Right ventricle myocardium inferior (tissue), 1 donor: ENCODE measurements at regions of chr3 and their contacts with region 1.

Region 1: DNA sequence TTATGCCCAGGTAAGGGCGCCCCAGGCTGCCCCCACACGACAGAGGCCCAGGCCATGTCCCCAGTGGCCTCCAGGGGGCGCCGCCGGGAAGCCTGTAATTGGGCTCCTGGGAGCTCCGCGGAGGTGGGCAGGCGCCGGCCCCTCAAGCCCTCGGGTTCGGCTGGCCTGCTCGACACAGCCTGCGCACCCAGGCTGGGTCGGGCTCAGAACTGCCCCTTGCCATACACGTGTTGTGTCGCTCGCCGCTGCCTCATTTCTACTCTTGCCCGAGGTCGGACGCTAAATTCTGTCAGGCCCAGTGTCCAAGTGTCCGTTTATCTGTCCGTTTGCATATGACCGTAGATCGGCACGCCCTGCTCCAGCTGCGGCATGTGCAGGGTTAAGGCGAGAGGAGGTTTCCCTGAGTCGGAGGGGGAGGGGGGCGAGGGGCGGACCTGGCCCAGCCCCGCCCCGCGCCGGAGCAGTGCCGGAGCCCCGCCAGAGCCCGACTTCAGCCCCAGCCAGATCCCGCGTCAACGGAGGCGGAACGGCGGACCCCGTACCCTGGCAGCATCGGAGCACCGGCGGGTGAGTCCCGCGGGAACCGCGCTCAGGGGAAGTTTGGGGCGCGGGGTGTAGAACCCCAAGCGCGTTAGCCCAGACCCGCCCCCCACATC is at the start of gene KLHDC8B:
- DNase-seq: peak; percentile 92
- ATAC-seq: peak; percentile 91
- total RNA-seq, gene KLHDC8B: 128 TPM

Region 2: DNA sequence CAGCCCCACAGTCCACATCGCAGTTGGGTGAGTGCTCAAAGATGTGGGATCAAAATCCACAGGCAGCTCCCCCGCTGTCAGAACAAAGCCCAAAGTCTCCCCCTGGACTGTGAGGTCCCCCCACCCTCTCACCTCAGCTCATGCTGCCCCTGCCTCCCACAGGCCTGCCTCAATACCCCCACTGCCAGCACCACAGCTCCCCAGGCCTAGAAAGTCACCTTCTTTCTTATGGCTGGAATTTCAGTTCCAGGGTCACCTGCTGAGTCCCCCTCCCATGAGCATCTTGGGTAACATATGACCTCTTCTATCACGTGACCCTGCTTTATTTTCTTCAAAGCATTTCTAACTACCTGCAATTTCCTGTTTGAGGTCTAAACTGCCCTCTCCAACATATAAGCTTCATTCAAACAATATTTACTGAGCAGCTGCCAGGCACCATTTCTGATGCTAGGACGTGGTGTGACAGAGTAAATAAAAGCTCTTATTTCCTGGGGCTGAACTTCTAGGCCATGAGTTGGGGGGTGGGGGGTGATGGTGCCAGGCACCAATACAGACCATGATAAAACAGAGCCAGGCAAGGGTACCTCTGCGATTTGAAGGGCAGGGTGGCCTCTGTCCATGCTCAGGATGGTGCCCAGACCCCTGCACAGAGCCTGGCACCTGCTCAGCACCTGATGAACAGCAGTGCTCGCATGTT is 547.2 kb before region 1 on chr3:
- intact Hi-C with region 1: no loop called
- DNase-seq: no peak
- ATAC-seq: no peak

Region 3: GRCh38 chr3:48716982-48717746 is 454.1 kb before region 1 on chr3 and contains the start of gene IP6K2:
- intact Hi-C with region 1: no loop called
- DNase-seq: peak; percentile 99
- ATAC-seq: peak; percentile 99
- total RNA-seq, gene IP6K2: 29.3 TPM

Region 4: GRCh38 chr3:49199239-49199899 is 28.1 kb after region 1 on chr3:
- intact Hi-C with region 1: loop called (anchors 2 kb)
- DNase-seq: peak; percentile 96
- ATAC-seq: peak; percentile 98

Region 5: DNA sequence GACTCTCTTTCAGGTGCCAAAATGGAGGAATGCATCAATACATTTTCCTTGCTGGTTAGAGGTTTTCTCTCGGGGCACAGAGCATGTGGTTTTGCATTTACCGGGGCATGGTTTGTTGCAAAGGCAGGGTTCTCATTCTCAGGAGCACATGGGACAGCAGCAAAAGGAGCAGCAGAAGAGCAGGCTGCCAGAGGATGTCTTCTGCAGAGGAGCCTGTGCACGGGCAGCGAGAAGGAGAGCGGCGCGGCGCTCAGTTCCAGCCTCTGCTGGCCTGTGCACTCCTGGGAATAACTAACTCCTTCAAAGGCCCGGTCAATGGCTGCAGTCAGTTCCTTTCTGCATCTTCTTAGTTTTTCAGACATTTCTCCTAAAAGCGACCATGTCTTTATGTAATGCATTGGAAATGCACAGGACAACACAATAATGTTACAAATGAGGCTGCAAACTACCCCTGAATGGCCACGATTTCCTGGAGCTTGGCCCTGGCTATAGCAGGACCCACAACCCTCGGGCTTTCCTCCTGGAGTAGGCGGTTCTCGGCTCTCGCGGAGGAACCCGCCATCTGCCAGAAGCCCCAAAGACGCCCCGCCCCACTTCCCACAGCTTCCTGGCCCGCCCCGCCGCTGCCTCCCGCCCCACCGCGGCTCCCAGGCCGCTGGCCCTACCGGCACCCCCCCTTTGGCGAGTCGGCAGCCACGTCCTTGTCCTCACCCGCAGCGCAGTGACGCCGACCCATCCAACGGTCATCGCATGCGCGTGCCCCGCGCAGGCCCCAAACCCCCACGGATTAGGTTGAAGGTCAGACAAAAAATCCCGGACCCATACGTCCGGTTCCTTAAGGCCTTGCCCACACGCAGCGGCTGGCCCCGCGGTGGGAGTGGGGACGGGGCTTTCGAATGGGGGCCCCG is 105.5 kb after region 1 on chr3 and contains the start of gene C3orf62:
- intact Hi-C with region 1: loop called (anchors 2 kb)
- DNase-seq: peak; percentile 95
- ATAC-seq: peak; percentile 96
- total RNA-seq, gene C3orf62: 2.1 TPM

Region 6: GRCh38 chr3:49339945-49340800 is 168.9 kb after region 1 on chr3 and contains the start of gene USP4:
- intact Hi-C with region 1: loop called (anchors 1 kb)
- DNase-seq: peak; percentile 98
- ATAC-seq: peak; percentile 98
- total RNA-seq, gene USP4: 39.4 TPM

Region 7: GRCh38 chr3:49411968-49412631 is 240.9 kb after region 1 on chr3 and contains the starts of genes RHOA and TCTA:
- intact Hi-C with region 1: loop called (anchors 10 kb)
- DNase-seq: peak; percentile 100
- ATAC-seq: peak; percentile 96
- total RNA-seq, gene RHOA: 285 TPM
- total RNA-seq, gene TCTA: 17.1 TPM

Region 8: GRCh38 chr3:49469936-49470713 is 298.9 kb after region 1 on chr3 and contains the start of gene DAG1:
- intact Hi-C with region 1: loop called (anchors 5 kb)
- DNase-seq: peak; percentile 99
- ATAC-seq: peak; percentile 93
- total RNA-seq, gene DAG1: 129 TPM